Activated T-helper 2 cell treated with anti-CD3 and anti-CD28 coated beads, Interferon-gamma antibody, Interleukin-2, Interleukin-4, amounts not matched to agents 10 μg/mL and 5 μg/mL and 100 μg/mL, durations not matched to agents 14 hours and 24 hours and 36 hours (primary cell): ENCODE measurements at regions of chr10 and their contacts with region 1.

Region 1: DNA sequence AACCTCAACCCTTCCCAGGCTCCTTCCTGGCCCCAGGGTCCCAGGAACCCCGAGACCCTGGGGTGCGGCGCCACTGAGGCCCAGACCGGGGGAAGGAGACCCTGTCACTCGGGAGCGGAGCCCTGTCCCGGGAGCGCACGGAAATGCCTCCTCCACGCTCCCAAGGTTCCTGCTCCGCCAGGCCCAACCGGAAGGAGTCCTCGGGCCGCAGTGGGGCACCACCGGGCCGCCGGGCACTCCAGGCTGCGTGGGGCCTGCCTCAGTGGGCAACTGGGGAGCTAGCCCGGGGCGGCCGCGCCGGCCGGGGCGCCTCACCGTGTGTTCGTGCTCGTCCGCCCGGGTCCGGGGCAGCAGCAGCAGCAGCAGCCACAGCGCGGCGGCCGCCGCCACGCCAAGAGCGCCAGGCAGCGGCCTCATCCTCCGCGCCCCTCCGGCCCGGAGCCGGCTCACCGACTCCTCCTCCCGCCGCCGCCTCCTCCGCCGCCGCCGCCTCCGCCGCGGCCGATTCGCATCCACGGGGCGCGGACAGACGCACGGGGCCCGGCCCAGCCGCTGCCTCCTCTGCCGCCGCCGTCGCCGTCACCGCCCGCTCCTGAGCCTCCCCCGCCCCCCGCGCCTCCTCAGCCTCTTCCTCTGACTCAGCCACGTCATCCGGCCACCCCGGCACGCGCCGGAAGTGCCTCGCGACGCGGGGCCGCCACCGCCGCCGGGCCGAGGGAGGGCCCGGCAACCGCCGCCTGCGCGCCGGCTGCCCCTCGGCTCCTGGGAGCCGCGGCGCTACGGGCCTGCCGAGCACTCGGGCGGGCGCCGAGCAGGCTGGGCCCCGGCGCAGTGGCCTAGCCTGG is at the start of gene TM9SF3:
- DNase-seq: peak; percentile 87
- H3K4me3 Mint-ChIP-seq: peak within 1 kb of the TSS; percentile 95
- H3K27ac Mint-ChIP-seq: peak within 1 kb of the TSS; percentile 88
- H3K4me1 Mint-ChIP-seq: peaks cover 29% of the 10 kb centered on the region
- H3K27me3 Mint-ChIP-seq: peaks cover 10% of the 10 kb centered on the region
- total RNA-seq, gene TM9SF3: 81.3 and 82.3 TPM in 2 replicates

Region 2: DNA sequence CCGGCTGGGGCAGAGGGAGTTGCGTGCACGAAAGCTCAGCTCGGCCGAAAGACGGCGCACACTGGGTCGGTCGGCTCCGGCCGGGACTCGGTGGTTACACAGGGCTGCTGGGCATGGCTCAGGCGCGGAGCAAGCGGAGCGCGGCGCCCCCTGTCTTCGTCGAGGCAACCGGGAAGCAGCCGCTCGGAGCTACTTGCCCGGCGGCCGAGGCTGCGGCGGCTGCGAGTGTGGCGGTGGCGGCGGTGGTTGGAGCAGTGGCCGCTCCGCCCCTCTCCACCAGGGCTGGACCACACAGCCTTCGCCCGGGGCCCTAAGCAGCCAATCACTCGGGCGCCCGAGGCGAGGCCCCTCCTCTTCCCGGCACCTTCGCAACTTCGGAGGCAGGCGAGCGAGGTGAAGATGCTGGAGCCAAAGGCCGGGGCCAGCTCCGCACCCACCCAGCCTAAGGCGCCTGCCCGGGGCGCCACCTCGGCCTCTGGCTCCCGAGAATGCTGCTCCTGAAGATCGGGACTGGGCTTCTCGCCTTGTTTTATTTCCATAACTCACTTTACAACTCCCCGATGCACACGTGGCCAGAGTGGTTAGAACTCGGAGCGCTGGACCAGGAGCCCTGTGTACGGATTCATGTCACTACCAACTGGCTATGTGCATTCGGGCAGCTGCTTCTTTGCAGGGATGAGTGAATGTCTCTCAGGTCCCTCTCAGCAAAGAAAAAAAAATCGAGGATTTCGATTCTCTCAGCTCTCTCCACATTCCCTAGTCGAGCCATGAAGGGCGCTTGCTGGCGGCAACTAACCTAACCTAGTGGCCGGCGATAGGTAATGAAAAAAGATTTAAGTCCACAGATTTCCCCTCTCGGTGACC is 72.7 kb before region 1 on chr10 and contains the start of gene TLL2:
- intact Hi-C with region 1: loop called (anchors 5 kb)
- DNase-seq: peak; percentile 63
- H3K4me3 Mint-ChIP-seq: peak within 1 kb of the TSS; percentile 66
- H3K27ac Mint-ChIP-seq: no peak within 1 kb of the TSS
- H3K4me1 Mint-ChIP-seq: peaks cover 10% of the 10 kb centered on the region
- H3K27me3 Mint-ChIP-seq: peaks cover 53% of the 10 kb centered on the region
- total RNA-seq, gene TLL2: 0.09 TPM in 1 of 2 replicates, not detected in the other

Region 3: GRCh38 chr10:96565774-96566173 is 20.9 kb before region 1 on chr10:
- intact Hi-C with region 1: loop called (anchors 2 kb)
- DNase-seq: no peak
- H3K4me3 Mint-ChIP-seq: no peak overlapping the region
- H3K27ac Mint-ChIP-seq: no peak overlapping the region
- H3K4me1 Mint-ChIP-seq: peaks cover 31% of the 10 kb centered on the region
- H3K27me3 Mint-ChIP-seq: no peaks in the 10 kb centered on the region

Region 4: GRCh38 chr10:96700374-96701099 is 113.9 kb after region 1 on chr10:
- intact Hi-C with region 1: no loop called
- DNase-seq: no peak
- H3K4me3 Mint-ChIP-seq: no peak overlapping the region
- H3K27ac Mint-ChIP-seq: no peak overlapping the region
- H3K4me1 Mint-ChIP-seq: peaks cover 13% of the 10 kb centered on the region
- H3K27me3 Mint-ChIP-seq: no peaks in the 10 kb centered on the region

Region 5: DNA sequence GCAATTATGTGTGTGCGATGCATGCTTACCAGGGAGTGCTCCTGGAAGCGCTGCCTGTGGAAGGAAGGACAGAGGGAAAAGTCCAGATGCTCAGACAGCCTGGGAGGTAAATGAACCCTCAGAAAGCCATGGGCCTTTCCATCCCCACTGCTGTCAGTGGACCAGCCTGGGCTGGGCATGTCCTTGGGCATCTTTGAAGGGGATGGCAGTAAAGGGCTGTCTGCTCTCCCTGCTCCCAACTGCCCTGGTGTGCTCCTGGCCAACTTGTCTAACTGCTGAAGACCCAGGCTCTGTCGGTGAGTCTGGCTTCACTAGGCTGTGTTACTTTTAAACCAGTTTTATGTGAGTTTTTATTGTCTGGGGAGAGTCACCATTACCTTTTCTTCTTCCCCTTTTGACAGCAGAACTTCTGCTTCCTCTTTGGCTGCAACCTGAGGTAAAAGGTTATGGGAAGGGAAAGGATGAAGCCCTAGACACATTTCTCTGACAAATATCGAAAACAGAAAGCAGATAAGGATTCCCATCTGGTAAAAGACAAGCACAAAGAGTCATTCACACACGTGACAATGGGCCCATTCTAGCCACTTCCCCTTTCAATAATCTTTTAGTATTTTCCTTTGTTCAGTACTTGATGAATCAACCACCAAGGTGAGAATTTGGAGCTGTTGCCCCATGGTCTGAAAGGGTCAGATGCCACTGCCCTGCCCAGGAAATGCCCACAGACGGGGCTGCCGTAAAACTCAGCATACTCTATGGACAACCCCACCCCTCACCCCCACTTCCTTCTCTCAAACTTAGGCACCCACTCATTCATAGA is 161.3 kb after region 1 on chr10:
- intact Hi-C with region 1: loop called (anchors 1 kb)
- DNase-seq: peak; percentile 20
- H3K4me3 Mint-ChIP-seq: peak overlapping the region; percentile 26
- H3K27ac Mint-ChIP-seq: peak overlapping the region; percentile 51
- H3K4me1 Mint-ChIP-seq: peaks cover 18% of the 10 kb centered on the region
- H3K27me3 Mint-ChIP-seq: peaks cover 19% of the 10 kb centered on the region

Region 6: DNA sequence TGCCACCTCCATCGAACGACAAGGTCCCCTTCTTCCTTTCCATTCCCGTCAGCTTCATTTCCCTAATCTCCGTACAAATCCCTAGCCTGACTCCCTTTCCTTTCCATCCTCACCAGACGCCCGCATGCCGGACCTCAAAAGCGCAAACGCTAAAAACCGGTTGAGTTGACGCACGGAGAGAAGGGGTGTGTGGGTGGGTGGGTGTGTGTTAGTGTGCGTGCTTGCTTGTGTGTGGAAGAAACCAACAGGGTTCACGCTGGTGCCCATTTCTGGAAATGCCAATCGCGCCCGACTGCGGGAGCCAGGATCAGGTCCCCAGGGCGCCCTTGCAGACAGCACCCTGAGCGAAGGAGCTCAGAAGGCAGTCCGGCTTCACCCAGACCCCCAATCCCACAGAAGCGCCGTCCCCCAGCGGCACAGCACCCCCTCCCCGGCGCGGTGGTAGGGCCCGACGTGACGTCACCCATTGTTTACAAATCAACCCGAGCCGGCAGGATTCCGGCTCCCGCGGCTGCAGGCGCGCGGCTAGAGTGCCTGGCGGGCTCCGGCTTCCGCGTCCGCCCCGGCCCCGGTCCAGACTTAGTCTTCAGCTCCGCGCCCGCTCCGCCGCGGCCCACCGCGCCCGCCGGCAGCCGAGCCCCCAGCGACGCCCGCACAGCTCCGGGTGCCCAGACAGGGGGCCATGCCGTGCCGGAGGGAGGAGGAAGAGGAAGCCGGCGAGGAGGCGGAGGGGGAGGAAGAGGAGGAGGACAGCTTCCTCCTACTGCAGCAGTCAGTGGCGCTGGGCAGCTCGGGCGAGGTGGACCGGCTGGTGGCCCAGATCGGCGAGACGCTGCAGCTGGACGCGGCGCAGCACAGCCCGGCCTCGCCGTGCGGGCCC is 732.4 kb after region 1 on chr10 and contains the start of gene FRAT1:
- intact Hi-C with region 1: loop called (anchors 10 kb)
- DNase-seq: peak; percentile 89
- H3K4me3 Mint-ChIP-seq: peak within 1 kb of the TSS; percentile 91
- H3K27ac Mint-ChIP-seq: peak within 1 kb of the TSS; percentile 99
- H3K4me1 Mint-ChIP-seq: peaks cover 19% of the 10 kb centered on the region
- H3K27me3 Mint-ChIP-seq: peaks cover 10% of the 10 kb centered on the region
- total RNA-seq, gene FRAT1: 2.9 and 3.4 TPM in 2 replicates